Spleen (tissue), 13 donors: ENCODE measurements at regions of chr15 and their contacts with region 1.

Region 1: DNA sequence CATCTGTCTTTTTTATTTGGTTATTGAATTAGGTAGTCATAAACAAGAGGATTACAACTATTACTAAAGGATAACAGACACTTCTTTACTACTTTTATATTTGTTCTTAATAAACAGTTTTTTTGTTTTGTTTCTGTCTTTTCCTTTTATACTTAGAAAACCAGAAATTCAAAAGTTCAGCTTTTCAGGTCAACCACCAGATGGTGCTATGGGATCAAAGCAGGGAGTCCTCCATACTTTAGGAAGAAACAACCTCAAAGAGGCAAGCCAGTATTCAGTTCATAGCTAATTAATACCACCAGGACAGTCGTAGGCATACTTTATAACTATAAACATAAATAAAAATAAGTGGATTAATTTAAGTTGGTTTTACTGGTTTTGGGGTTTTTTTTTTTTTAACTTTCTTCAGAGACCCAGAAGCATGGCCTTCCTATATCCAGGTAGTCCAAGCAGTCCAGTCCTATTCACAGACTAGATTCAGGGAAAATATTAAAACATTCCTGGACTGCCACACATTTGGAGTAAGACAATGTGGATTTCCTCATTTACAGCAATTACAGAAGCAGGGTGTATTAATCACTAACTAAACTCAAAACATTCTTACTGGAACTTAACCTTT is 16.0 kb upstream of the EID1 start:
- DNase-seq: no peak
- H3K4me3 ChIP-seq: no peak overlapping the region
- H3K27ac ChIP-seq: no peak overlapping the region
- H3K4me1 ChIP-seq: peaks cover 0 to 10% (median 0%) of the 10 kb centered on the region in 6 donors
- H3K27me3 ChIP-seq: no peaks in the 10 kb centered on the region
- CTCF ChIP-seq: peak; percentile 46 to 83 (median 70)
- POLR2A ChIP-seq: no peak

Region 2: DNA sequence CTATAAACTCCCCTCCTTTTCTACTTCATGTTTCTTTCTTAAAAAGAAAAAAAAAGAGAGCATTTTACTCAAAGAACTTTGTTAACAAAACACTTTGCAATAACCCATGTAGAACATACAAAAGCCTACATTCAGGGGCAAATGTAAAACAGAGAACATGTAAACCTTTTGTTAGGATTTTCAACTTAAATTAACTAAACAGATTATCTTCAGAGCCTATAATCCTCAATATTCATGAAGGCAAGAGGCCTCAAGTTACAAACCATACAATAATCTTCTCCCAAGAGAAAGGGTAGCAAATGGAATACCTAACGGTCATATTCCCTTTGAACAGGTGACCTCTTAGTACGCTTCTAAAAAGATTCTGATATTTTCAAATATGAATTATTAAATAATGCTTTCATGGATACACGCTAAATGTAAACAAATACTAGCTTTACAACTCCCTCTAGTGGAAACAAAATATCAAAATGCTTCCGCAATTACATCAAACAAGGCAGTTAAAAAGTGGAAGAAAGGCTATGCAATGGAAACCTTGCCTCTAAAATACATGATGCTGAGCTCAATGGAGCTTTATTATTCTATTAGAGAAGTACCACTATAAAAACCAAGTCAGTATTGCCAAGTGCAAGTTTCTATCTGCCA is 61.0 kb before region 1 on chr15:
- intact Hi-C with region 1: no loop called
- DNase-seq: no peak
- H3K4me3 ChIP-seq: no peak overlapping the region
- H3K27ac ChIP-seq: no peak overlapping the region
- H3K4me1 ChIP-seq: peaks cover 0 to 27% (median 4%) of the 10 kb centered on the region in 6 donors
- H3K27me3 ChIP-seq: no peaks in the 10 kb centered on the region
- CTCF ChIP-seq: peak in 7 of 11 experiments; percentile 49 to 63 (median 53)
- POLR2A ChIP-seq: no peak

Region 3: DNA sequence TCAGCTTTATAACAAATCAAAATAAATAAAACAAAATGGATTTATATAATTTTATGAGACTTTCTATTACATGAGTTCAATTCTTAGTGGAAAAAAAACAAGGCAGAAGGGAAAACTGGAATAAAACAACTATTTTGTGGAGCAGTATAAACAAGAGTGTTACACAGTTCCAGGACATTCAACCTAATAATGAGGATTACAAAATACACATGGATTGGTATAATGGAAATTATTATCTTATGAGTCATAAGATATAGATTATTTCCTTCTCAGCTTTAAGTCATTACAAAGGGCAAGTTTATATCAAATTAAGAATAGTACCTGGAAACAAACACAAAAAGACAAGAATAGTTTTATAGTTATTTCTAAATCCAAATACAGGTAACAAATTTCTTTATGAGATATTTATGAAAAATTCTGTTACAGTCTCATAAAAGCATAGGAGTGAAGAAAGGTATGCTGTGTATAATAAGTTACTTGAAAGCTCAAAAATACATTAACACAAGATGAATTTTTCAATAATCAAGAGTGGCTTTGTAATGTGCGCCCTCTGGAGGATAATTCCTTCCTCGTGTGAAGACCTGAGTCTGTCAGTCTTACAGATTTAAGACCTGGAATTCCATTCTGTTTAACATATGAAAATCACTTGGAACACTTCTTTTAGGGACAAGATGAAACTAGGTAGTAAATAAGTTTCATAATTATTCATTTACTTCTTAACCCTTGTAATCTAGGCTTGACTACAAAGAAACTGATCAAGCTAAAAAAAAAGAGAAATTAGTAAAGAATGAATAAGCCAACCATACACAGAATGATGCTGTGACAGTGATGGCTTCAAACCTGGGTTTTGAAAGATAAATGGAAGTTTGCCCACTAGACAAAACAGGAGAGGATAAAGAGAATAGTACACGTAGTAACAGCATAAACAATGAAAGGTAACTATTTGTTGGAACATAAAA is 284.0 kb after region 1 on chr15:
- intact Hi-C with region 1: loop called (anchors 5 kb)
- DNase-seq: no peak
- H3K4me3 ChIP-seq: no peak overlapping the region
- H3K27ac ChIP-seq: no peak overlapping the region
- H3K4me1 ChIP-seq: peaks cover 14 to 66% (median 53%) of the 10 kb centered on the region in 6 donors
- H3K27me3 ChIP-seq: no peaks in the 10 kb centered on the region
- CTCF ChIP-seq: peak in 10 of 11 experiments; percentile 6 to 64 (median 47)
- POLR2A ChIP-seq: no peak

Region 4: DNA sequence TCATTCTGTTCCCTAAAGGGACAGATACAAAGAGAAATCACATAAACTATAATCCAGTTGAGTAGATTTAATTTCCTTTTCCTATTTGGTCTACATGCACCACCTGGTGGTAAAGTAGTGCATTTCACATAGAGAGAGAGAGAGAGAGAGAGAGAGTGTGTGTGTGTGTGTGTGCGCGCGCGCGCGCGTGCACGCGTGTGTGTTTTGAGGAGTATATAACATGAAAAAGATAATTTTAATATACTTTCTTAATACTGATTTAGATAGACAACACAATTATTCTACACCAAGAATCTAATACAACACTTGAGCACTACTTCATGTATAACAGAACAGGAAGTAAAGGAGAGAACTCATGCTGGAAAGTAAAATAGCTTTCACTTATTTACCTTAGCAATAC is 560.1 kb after region 1 on chr15:
- intact Hi-C with region 1: loop called (anchors 5 kb)
- DNase-seq: peak; percentile 37
- H3K4me3 ChIP-seq: peak overlapping the region in 4 of 8 donors; percentile 0 to 50 (median 9)
- H3K27ac ChIP-seq: no peak overlapping the region
- H3K4me1 ChIP-seq: peaks cover 0 to 7% (median 2%) of the 10 kb centered on the region in 6 donors
- H3K27me3 ChIP-seq: no peaks in the 10 kb centered on the region
- CTCF ChIP-seq: peak; percentile 50 to 93 (median 83)
- POLR2A ChIP-seq: no peak

Region 5: DNA sequence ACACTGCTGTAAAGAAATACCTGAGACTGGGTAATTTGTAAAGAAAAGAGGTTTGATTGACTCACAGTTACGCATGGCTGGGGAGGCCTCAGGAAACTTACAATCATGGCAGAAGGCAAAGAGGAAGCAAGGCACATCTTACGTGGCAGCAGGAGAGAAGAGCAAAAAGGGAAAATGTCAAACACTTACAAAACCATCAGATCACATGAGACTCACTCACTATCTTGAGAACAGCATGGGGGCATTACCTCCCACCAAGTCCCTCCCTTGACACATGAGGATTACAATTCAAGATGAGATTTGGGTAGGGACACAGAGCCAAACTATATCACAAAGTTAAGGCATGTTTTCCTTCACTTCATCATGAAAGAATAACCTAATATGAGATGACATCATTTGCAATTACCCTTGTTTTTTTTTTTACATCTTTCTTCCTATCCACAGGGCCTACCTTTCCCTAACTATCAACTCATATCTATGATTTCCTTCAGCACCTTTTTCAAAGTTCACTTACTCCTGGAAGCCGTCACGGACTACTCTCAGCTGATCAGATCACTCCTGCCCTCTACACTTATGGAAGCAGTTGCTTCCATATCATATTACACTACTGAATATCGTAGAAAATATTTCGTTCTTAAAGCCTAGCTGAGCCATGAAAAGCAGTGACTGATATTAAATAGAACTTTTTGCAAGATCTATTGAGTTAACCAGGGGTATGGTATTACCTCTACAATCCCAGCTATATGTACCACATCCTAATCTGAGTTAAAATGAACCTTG is 1282.6 kb after region 1 on chr15:
- intact Hi-C with region 1: loop called (anchors 5 kb)
- DNase-seq: no peak
- H3K4me3 ChIP-seq: no peak overlapping the region
- H3K27ac ChIP-seq: no peak overlapping the region
- H3K4me1 ChIP-seq: peaks cover 0 to 8% (median 2%) of the 10 kb centered on the region in 6 donors
- H3K27me3 ChIP-seq: no peaks in the 10 kb centered on the region
- CTCF ChIP-seq: no peak
- POLR2A ChIP-seq: no peak